AG04450 (cell line): ENCODE measurements at regions of chr4 and their contacts with region 1.

Region 1: GRCh38 chr4:6640292-6641163 is at the start of gene MRFAP1:
- DNase-seq: peak; percentile 76
- H3K4me3 ChIP-seq: peak within 1 kb of the TSS; percentile 73
- H3K27ac ChIP-seq: peak within 1 kb of the TSS; percentile 93
- H3K27me3 ChIP-seq: no peaks in the 10 kb centered on the region
- CTCF ChIP-seq: no peak
- polyA plus RNA-seq, gene MRFAP1: 252 and 298 TPM in 2 replicates

Region 2: GRCh38 chr4:5710961-5711478 is 929.5 kb before region 1 on chr4 and contains the start of gene EVC:
- CTCF ChIA-PET with region 1: no interaction called
- POLR2A ChIA-PET with region 1: interaction called, 11 read pairs
- DNase-seq: peak; percentile 36
- H3K4me3 ChIP-seq: peak within 1 kb of the TSS; percentile 91
- H3K27ac ChIP-seq: peak within 1 kb of the TSS; percentile 78
- H3K27me3 ChIP-seq: no peaks in the 10 kb centered on the region
- CTCF ChIP-seq: no peak
- polyA plus RNA-seq, gene EVC: 11.5 and 15.8 TPM in 2 replicates

Region 3: DNA sequence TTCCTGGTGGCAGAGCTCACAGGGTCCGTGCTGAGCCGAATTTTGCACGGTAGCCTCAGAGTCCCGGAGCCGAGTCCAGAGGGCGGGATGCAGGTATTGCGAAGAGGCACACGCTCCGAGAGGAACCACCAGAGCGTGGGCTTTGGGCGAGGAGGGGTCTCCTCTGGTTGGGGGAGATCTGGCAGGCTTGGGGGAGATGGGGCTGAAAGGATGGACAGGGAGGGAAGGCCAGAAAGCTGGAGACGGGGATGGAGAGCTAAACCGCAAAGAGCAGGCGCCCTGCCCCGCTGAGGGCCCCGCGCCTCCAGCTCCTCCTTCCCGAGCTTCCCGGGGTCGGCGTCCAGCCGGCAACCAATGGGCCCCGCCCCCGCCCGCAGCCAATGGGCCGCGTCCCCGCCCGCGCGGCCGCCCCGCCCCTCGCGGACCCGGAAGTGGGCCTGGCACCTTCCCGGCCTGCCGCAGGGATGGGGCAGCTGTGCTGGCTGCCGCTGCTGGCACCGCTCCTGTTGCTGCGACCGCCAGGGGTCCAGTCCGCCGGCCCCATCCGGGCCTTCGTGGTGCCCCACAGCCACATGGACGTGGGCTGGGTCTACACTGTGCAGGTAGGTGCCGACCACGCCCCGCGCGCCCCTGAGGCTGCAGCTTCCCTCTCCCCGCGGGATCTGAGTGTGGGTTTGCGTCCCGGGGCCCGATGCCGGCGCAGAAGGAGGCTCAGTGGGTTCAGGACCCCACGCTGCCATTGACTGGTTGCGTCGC is 65.6 kb before region 1 on chr4 and contains the start of gene MAN2B2:
- CTCF ChIA-PET with region 1: no interaction called
- POLR2A ChIA-PET with region 1: interaction called, 10 read pairs
- DNase-seq: peak; percentile 11
- H3K4me3 ChIP-seq: peak within 1 kb of the TSS; percentile 97
- H3K27ac ChIP-seq: no peak within 1 kb of the TSS
- H3K27me3 ChIP-seq: peaks cover 12% of the 10 kb centered on the region
- CTCF ChIP-seq: no peak
- polyA plus RNA-seq, gene MAN2B2: 22.8 and 28.1 TPM in 2 replicates

Region 4: DNA sequence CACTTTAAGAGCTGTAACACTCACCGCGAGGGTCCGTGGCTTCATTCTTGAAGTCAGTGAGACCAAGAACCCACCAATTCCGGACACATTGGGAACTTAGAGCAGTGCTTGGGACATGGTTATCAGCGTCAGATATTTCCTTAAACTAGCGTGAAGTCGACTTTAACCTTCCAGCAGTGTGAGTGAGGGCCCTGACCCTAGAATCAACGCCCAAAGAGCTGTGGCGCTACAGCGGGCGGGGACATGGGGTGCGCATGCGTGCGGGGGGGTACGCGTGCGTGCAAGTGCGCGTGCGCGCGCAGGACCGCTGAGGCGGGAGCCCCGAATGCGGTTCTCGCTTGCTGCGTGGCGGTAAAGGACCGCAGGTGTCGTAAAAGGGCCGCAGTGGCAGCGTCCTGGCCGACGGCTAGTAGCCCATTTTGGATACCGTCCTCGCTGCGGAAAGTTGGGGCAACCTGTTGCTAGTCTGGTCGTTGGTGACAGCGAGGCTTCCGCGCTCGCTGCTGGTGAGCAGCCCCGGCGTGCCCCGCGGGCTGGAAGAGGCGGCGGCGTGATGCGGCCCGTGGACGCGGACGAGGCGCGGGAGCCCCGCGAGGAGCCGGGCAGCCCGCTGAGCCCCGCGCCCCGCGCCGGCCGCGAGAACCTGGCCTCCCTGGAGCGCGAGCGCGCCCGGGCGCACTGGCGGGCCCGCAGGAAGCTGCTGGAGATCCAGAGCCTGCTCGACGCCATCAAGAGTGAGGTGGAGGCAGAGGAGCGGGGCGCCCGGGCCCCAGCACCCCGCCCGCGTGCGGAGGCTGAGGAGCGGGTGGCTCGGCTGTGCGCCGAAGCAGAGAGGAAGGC is 33.4 kb after region 1 on chr4:
- CTCF ChIA-PET with region 1: no interaction called
- POLR2A ChIA-PET with region 1: interaction called, 20 read pairs
- DNase-seq: peak; percentile 90
- H3K4me3 ChIP-seq: peak overlapping the region; percentile 64
- H3K27ac ChIP-seq: no peak overlapping the region
- H3K27me3 ChIP-seq: no peaks in the 10 kb centered on the region
- CTCF ChIP-seq: no peak

Region 5: GRCh38 chr4:6709230-6710114 is 68.9 kb after region 1 on chr4 and contains the start of gene MRFAP1L1:
- CTCF ChIA-PET with region 1: no interaction called
- POLR2A ChIA-PET with region 1: interaction called, 10 read pairs
- DNase-seq: peak; percentile 92
- H3K4me3 ChIP-seq: peak within 1 kb of the TSS; percentile 92
- H3K27ac ChIP-seq: peak within 1 kb of the TSS; percentile 79
- H3K27me3 ChIP-seq: peaks cover 3% of the 10 kb centered on the region
- CTCF ChIP-seq: peak; percentile 29
- polyA plus RNA-seq, gene MRFAP1L1: 70.6 and 96.5 TPM in 2 replicates